RWPE1 (cell line): ENCODE measurements at regions of chr12 and their contacts with region 1.

Region 1: GRCh38 chr12:113241191-113242025 is 20.1 kb downstream of the TPCN1 start:
- DNase-seq: peak; percentile 88
- H3K27ac ChIP-seq: peak overlapping the region; percentile 98
- CTCF ChIP-seq: no peak

Region 2: GRCh38 chr12:113260133-113260967 is 18.9 kb after region 1 on chr12:
- CTCF ChIA-PET with region 1: interaction called, 3 read pairs
- POLR2A ChIA-PET with region 1: interaction called, 17 read pairs
- DNase-seq: no peak
- H3K27ac ChIP-seq: peak overlapping the region; percentile 11; the same call in 1 of the 2 replicates
- CTCF ChIP-seq: no peak